Transverse colon (tissue), 4 donors: ENCODE measurements at regions of chr6 and their contacts with region 1.

Region 1: DNA sequence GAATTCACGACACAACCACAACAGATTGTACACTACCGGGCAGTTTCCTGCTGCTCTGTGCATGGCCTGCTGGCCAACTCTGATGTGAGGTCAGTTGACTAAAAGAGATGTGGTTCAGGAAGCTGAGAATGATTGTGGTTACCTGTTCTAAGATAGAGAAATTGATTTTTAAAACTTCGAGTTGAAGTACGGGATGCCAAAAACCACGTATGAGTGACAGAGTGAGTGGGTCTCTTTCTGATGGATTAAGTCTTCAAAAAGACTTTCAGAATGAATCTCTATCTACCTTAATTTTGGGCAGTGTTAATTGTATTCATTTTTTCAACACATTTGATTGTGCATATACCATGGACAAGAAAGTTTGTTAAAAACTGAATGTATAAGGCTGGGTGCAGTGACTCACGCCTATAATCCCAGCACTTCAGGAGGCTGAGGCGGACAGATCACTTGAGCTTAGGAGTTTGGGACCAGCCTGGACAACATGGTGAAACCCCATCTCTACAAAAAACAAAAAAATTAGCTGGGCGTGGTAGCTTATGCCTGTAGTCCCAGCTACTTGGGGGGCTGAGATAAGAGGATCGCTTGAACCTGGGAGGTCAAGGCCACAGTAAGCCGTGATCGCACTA is 121.2 kb downstream of the SGK1 start:
- DNase-seq: no peak
- H3K4me3 ChIP-seq: no peak overlapping the region
- H3K27ac ChIP-seq: no peak overlapping the region
- H3K4me1 ChIP-seq: no peaks in the 10 kb centered on the region
- H3K27me3 ChIP-seq: no peaks in the 10 kb centered on the region
- CTCF ChIP-seq: no peak
- EP300 ChIP-seq: no peak
- POLR2A ChIP-seq: no peak

Region 2: DNA sequence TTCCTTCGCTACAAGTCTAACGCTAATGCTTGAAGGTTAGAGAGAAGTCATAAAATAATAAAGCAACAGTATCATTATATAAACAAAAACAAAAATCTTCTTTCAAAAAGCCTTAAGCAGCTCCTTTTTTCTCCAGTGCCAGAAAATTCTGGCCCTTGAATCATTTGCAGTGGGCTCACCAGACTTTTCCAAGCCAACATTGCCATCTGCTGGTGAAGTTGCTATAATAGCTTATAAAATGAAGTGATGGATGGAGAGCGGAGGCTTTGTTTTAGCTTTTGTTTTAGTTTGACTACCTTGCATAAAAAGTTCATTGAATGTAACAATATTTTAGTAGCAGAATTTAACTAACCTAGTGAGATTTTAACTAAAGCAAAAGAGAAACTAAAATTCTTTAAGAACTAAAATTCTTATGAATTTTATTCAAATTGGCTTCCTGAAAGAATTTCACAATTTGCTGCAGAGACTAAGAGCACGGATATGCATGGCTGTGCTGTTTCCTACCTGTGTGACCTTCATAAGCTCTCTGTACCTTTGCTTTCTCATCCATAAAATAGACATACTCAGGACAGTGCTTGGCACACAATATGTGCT is 99.5 kb before region 1 on chr6:
- in situ Hi-C with region 1: no loop called
- intact Hi-C with region 1: no loop called
- DNase-seq: peak; percentile 58
- H3K4me3 ChIP-seq: no peak overlapping the region
- H3K27ac ChIP-seq: no peak overlapping the region
- H3K4me1 ChIP-seq: no peaks in the 10 kb centered on the region
- H3K27me3 ChIP-seq: no peaks in the 10 kb centered on the region
- CTCF ChIP-seq: peak; percentile 54 to 74 (median 64)
- EP300 ChIP-seq: no peak
- POLR2A ChIP-seq: no peak

Region 3: DNA sequence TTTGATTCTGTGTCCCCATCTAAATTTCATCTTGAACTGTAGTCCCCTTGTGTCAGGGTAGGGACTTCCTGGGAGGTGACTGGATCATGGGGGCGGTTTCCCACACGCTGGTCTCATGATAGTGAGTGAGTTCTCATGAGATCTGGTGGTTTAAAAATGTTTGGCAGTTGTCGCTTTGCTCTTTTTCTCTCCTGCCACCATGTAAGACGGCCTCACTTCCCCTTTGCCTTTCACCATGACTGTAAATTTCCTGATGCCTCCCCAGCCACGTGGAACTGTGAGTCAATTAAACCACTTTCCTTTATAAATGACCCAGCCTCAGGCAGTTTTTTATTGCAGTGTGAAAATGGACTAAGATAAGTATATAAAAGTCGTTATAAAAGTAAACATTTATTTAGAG is 201.8 kb after region 1 on chr6:
- in situ Hi-C with region 1: no loop called
- intact Hi-C with region 1: loop called (anchors 10 kb)
- DNase-seq: peak; percentile 18
- H3K4me3 ChIP-seq: no peak overlapping the region
- H3K27ac ChIP-seq: no peak overlapping the region
- H3K4me1 ChIP-seq: no peaks in the 10 kb centered on the region
- H3K27me3 ChIP-seq: no peaks in the 10 kb centered on the region
- CTCF ChIP-seq: no peak
- EP300 ChIP-seq: no peak
- POLR2A ChIP-seq: no peak